Activated CD8-positive, alpha-beta T cell treated with anti-CD3 and anti-CD28 coated beads for 36 hours (primary cell): ENCODE measurements at regions of chrX and their contacts with region 1.

Region 1: DNA sequence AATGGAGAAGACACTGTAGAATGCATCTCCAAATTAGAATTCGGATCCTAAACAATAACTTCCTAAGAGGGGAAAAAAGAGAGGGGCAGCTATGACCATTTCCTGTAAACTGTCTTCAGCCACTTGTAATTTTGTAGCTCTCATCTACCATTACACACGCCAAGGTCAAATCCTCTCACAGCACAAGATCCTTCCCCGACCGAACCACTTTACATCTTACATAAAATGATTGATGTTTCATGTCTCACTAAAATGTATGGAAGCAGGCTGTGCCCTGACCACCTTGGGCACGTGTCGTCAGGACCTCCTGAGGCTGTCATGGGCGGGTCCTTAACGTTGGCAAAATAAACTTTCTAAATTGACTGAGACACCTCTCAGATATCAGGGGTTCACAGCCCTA is 24.1 kb upstream of the PBDC1 start:
- DNase-seq: peak; percentile 64
- ATAC-seq: peak; percentile 37
- H3K4me3 Mint-ChIP-seq: peak overlapping the region; percentile 75
- H3K27ac Mint-ChIP-seq: peak overlapping the region; percentile 97
- H3K4me1 Mint-ChIP-seq: peaks cover 14% of the 10 kb centered on the region
- H3K27me3 Mint-ChIP-seq: no peaks in the 10 kb centered on the region
- CTCF ChIP-seq: no peak

Region 2: DNA sequence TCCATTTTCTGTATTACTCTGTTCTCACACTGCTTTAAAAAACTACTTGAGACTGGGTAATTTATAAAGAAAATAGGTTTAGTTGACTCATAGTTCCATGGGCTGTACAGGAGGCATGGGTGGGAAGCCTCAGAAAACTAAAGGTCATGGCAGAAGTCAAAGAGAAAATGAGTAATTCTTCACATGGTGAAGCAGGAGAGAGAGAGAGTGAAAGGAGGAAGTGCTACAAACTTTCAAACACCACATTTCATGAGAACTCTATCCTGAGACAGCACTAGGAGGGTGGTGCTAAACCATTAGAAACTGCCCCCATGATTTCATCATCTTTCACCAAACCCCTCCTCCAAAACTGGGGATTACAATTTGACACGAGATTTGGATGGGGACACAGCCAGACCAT is 83.9 kb before region 1 on chrX:
- CTCF ChIA-PET with region 1: no interaction called
- POLR2A ChIA-PET with region 1: no interaction called
- intact Hi-C with region 1: no loop called
- DNase-seq: peak; percentile 22
- ATAC-seq: peak; percentile 94
- H3K4me3 Mint-ChIP-seq: no peak overlapping the region
- H3K27ac Mint-ChIP-seq: peak overlapping the region; percentile 78
- H3K4me1 Mint-ChIP-seq: peaks cover 8% of the 10 kb centered on the region
- H3K27me3 Mint-ChIP-seq: peaks cover 2% of the 10 kb centered on the region
- CTCF ChIP-seq: no peak

Region 3: GRCh38 chrX:76172325-76172893 is 23.7 kb after region 1 on chrX:
- CTCF ChIA-PET with region 1: interaction called, 4 read pairs
- POLR2A ChIA-PET with region 1: interaction called, 14 read pairs
- intact Hi-C with region 1: no loop called
- DNase-seq: no peak
- ATAC-seq: no peak
- H3K4me3 Mint-ChIP-seq: peak overlapping the region; percentile 87
- H3K27ac Mint-ChIP-seq: peak overlapping the region; percentile 99
- H3K4me1 Mint-ChIP-seq: peaks cover 60% of the 10 kb centered on the region
- H3K27me3 Mint-ChIP-seq: no peaks in the 10 kb centered on the region
- CTCF ChIP-seq: no peak